ENCODE measurements at regions of chr11 and their contacts with region 1.

Region 1: GRCh38 chr11:59115553-59115952 is 8.5 kb downstream of the FAM111B start:
- DNase-seq: no peak

Region 2: DNA sequence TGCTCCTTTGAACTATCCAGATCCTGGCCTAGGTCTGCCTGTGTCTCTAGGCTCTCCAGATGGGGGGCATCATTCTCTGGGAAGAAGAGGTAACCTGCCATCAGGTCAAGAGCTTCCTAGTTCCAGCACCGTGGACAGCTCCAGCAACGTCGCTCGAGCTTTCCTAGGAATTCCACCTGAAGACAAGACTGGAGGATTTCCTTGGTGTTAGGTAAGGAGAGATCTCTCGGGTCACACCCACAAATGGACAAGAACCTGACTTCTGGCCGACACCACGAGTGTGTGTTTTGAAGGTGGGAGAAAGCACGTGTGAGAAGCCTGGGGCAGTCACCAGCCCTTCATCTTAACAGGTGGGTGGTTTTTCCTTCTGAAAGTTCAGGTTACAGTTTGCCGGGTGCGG is 1735.8 kb before region 1 on chr11:
- intact Hi-C with region 1: loop called in 1 of 2 experiments (anchors 5 kb)
- DNase-seq: no peak

Region 3: DNA sequence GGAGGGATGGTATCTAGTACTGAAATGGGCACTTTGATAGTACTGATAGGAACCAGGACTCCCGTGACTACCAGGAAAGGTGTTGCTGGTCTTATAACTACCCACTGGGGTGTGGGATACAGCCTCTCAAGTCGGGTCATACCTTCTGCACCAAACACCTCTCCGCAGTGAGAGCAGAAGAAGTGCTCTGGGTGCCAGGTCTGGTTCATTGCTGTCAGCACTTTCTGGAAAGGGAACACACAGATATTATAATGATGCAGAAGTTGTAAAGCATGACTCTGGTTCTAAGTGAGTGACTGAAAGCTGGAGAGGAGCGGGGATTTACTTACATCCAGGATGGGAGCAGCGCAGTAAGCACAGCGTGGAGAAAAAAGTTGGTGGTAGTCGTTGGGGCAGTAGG is 565.9 kb before region 1 on chr11:
- intact Hi-C with region 1: no loop called
- DNase-seq: no peak

Region 4: GRCh38 chr11:59076876-59077571 is 38.5 kb before region 1 on chr11:
- intact Hi-C with region 1: no loop called
- DNase-seq: no peak

Measured in posterior vena cava (tissue), 2 donors.